ENCODE measurements at regions of chr3 and their contacts with region 1.

Region 1: GRCh38 chr3:170811928-170812591 is 57.9 kb downstream of the RPL22L1 start:
- DNase-seq: peak; percentile 83
- H3K27ac ChIP-seq: peak overlapping the region; percentile 60
- CTCF ChIP-seq: peak; percentile 85

Region 2: DNA sequence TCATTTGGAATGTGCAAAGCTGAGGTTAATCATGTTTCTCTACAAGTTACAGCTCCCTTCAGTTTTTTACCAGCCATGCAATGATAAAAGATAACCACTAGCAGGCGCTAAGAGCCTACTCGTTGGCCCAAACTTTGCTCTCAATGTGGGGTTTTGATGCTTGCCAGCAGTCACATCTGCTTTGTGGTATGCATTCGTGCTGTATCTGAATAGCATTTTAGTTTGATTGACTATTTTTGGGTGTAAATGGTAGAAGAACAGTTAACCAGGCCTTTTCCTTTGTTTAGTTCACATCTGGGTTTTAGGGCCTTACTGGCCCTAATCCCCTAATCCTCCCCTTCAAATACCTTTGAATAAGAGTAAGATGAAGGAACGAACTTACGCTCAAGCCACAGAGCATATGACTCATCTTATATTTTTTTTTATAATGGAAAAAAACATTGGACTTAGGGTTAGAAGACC is 397.8 kb before region 1 on chr3:
- CTCF ChIA-PET with region 1: interaction called, 87 read pairs
- POLR2A ChIA-PET with region 1: no interaction called
- DNase-seq: peak; percentile 59
- H3K27ac ChIP-seq: no peak overlapping the region
- CTCF ChIP-seq: peak; percentile 98

Region 3: DNA sequence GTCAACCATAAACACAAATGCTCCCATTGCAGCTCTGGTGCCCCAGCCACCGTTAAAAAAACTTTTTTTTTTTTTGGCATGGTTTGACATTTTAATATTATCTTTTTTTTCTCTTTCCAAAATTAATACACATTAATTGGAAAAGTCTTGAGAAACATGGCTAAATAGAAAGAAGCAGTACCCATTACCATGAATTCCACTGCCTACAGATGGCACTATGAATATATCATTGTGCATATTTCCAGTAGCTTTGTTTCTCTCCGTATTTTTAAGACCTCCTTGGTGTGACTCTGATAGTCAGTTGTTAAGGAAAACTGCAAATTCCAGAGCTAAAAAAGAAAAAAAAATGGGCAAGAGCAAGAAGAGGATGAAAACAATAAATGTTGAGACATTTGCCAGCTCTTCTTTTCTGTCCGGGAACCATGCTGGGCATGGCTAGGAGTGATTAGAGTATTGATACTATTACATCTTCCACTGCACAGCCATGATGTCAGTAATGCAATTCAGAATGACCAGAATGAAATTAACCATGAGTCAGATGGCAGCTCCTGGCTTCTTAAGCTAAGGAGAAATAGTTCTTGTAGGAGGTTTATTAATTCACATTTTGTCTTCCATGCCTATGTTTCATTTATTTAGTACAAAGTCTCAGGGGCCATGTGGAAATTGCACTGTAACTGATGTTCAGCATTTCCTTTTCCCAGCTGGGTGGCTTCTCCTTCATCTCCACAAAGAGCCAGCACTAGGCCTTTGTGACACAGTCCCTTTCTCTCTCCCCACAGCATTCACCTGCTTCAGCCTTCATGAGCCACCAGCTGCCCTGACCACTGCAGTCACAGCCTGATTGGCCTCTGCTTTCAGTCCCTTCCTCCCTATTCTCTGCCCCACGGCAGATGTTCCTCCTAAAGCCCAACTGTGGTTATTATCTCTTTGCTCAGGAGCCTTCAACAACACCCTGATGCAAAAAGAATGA is 258.0 kb before region 1 on chr3:
- CTCF ChIA-PET with region 1: interaction called, 12 read pairs
- POLR2A ChIA-PET with region 1: no interaction called
- DNase-seq: no peak
- H3K27ac ChIP-seq: no peak overlapping the region
- CTCF ChIP-seq: no peak

Region 4: GRCh38 chr3:170660139-170660538 is 151.9 kb before region 1 on chr3:
- CTCF ChIA-PET with region 1: no interaction called
- POLR2A ChIA-PET with region 1: no interaction called
- DNase-seq: no peak
- H3K27ac ChIP-seq: no peak overlapping the region
- CTCF ChIP-seq: no peak

Region 5: GRCh38 chr3:170848292-170848917 is 36.3 kb after region 1 on chr3:
- CTCF ChIA-PET with region 1: interaction called, 10 read pairs
- POLR2A ChIA-PET with region 1: no interaction called
- DNase-seq: peak; percentile 37
- H3K27ac ChIP-seq: no peak overlapping the region
- CTCF ChIP-seq: peak; percentile 72